GM23248 (cell line): ENCODE measurements at regions of chr11 and their contacts with region 1.

Region 1: GRCh38 chr11:34174412-34175041 is 69.1 kb downstream of the NAT10 start:
- DNase-seq: peak; percentile 91
- H3K4me3 ChIP-seq: peak overlapping the region; percentile 63
- H3K27ac ChIP-seq: no peak overlapping the region
- H3K4me1 ChIP-seq: no peaks in the 10 kb centered on the region
- H3K27me3 ChIP-seq: no peaks in the 10 kb centered on the region

Region 2: GRCh38 chr11:33753304-33753967 is 421.1 kb before region 1 on chr11:
- in situ Hi-C with region 1: no loop called
- DNase-seq: peak; percentile 67
- H3K4me3 ChIP-seq: no peak overlapping the region
- H3K27ac ChIP-seq: no peak overlapping the region
- H3K4me1 ChIP-seq: peaks cover 12% of the 10 kb centered on the region
- H3K27me3 ChIP-seq: no peaks in the 10 kb centered on the region

Region 3: GRCh38 chr11:34357701-34358257 is 183.3 kb after region 1 on chr11 and contains the start of gene ABTB2:
- in situ Hi-C with region 1: loop called (anchors 5 kb)
- DNase-seq: peak; percentile 100
- H3K4me3 ChIP-seq: peak within 1 kb of the TSS; percentile 87
- H3K27ac ChIP-seq: peak within 1 kb of the TSS; percentile 32; the same call in 1 of the 2 replicates
- H3K4me1 ChIP-seq: peaks cover 16% of the 10 kb centered on the region
- H3K27me3 ChIP-seq: no peaks in the 10 kb centered on the region
- total RNA-seq, gene ABTB2: 9.9 and 12.4 TPM in 2 replicates

Region 4: DNA sequence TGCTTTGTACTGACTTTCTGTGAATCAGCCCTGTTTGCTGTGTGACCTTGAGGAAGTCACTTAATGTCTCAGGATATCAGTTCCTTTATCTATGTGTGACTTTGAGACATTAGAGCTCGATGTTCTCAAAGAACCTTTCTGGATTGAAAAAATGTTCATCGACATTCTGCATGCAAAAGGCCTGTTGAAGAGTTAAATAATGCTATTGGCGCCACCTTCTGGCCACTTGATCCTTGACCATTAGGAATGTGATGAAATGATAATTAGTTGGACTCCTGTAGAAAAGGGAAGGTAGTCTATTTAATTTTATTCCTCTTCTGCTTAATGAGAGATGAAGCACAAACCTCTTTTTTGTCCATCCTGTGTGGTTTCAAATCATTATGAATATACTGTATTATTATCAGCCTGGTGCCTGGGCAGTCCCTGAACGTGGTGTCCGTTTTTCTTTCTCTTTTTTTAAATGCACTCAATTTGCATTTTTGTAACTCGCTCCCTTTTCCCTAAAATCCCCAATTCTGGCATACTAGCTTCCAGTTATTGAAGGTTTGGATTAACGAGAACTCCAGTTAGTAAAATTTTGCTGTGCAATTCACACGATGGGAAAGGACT is 318.4 kb after region 1 on chr11:
- in situ Hi-C with region 1: loop called (anchors 10 kb)
- DNase-seq: peak; percentile 77
- H3K4me3 ChIP-seq: no peak overlapping the region
- H3K27ac ChIP-seq: no peak overlapping the region
- H3K4me1 ChIP-seq: no peaks in the 10 kb centered on the region
- H3K27me3 ChIP-seq: peaks cover 15% of the 10 kb centered on the region